ENCODE measurements at regions of chr6 and their contacts with region 1.

Region 1: GRCh38 chr6:166394036-166394892 is 11.5 kb upstream of the MPC1 start:
- DNase-seq: peak in 2 of 3 donors; percentile 74 to 88
- ATAC-seq: peak; percentile 91 to 94 (median 94)
- H3K4me3 ChIP-seq: no peak overlapping the region
- H3K27ac ChIP-seq: peak overlapping the region; percentile 11 to 80 (median 46)
- H3K4me1 ChIP-seq: peaks cover 0 to 35% (median 12%) of the 10 kb centered on the region in 4 donors
- H3K27me3 ChIP-seq: no peaks in the 10 kb centered on the region
- CTCF ChIP-seq: no peak
- POLR2A ChIP-seq: peak; percentile 53

Region 2: GRCh38 chr6:166313255-166314070 is 80.8 kb before region 1 on chr6:
- intact Hi-C with region 1: loop called in 1 of 2 experiments (anchors 10 kb)
- DNase-seq: peak in 2 of 3 donors; percentile 57 to 67
- ATAC-seq: peak; percentile 38 to 84 (median 70)
- H3K4me3 ChIP-seq: no peak overlapping the region
- H3K27ac ChIP-seq: no peak overlapping the region
- H3K4me1 ChIP-seq: peaks cover 0 to 10% (median 5%) of the 10 kb centered on the region in 4 donors
- H3K27me3 ChIP-seq: no peaks in the 10 kb centered on the region
- CTCF ChIP-seq: peak; percentile 54 to 83 (median 64)
- POLR2A ChIP-seq: no peak

Region 3: GRCh38 chr6:166456395-166457156 is 62.3 kb after region 1 on chr6:
- intact Hi-C with region 1: no loop called
- DNase-seq: no peak
- ATAC-seq: no peak
- H3K4me3 ChIP-seq: no peak overlapping the region
- H3K27ac ChIP-seq: no peak overlapping the region
- H3K4me1 ChIP-seq: no peaks in the 10 kb centered on the region
- H3K27me3 ChIP-seq: no peaks in the 10 kb centered on the region
- CTCF ChIP-seq: peak in 1 of 4 donors; percentile 10
- POLR2A ChIP-seq: no peak

Region 4: GRCh38 chr6:166664135-166664534 is 269.9 kb after region 1 on chr6:
- intact Hi-C with region 1: no loop called
- DNase-seq: no peak
- ATAC-seq: peak in 3 of 4 donors; percentile 32 to 45 (median 44)
- H3K4me3 ChIP-seq: no peak overlapping the region
- H3K27ac ChIP-seq: no peak overlapping the region
- H3K4me1 ChIP-seq: no peaks in the 10 kb centered on the region
- H3K27me3 ChIP-seq: no peaks in the 10 kb centered on the region
- CTCF ChIP-seq: no peak
- POLR2A ChIP-seq: no peak

Measured in right lobe of liver (tissue), 6 donors.